ENCODE measurements at regions of chr2 and their contacts with region 1.

Region 1: DNA sequence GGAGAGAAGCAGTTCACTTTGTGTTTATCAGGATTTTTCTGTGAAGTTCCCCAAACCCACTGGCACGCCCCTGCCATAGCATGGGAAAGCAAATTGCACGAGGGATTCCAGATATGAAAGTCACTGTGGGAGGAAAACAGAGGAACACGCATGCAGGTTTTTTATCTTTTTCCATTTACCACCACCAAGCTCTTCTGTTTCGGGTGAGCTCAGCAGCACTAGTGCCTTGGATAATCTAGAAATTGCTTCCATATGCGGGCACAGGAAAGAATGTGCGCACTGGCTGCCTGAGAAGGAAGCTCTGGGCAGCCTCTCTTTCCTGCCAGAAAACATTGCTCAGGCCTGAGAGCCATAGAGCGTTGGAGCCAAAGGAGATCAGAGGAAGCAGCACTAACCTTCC is 65.9 kb upstream of the WIPF1 start:
- DNase-seq: peak in 1 of 2 donors; percentile 80
- H3K4me3 ChIP-seq: peak overlapping the region in 1 of 2 donors; percentile 6
- H3K27ac ChIP-seq: peak overlapping the region; percentile 79 to 84
- H3K4me1 ChIP-seq: peaks cover 33 to 34% of the 10 kb centered on the region in 2 donors
- H3K27me3 ChIP-seq: no peaks in the 10 kb centered on the region
- CTCF ChIP-seq: no peak

Region 2: GRCh38 chr2:174615871-174616436 is 47.6 kb before region 1 on chr2:
- intact Hi-C with region 1: loop called (anchors 2 kb)
- DNase-seq: no peak
- H3K4me3 ChIP-seq: no peak overlapping the region
- H3K27ac ChIP-seq: peak overlapping the region; percentile 70 to 81
- H3K4me1 ChIP-seq: peaks cover 7 to 47% of the 10 kb centered on the region in 2 donors
- H3K27me3 ChIP-seq: no peaks in the 10 kb centered on the region
- CTCF ChIP-seq: no peak

Region 3: DNA sequence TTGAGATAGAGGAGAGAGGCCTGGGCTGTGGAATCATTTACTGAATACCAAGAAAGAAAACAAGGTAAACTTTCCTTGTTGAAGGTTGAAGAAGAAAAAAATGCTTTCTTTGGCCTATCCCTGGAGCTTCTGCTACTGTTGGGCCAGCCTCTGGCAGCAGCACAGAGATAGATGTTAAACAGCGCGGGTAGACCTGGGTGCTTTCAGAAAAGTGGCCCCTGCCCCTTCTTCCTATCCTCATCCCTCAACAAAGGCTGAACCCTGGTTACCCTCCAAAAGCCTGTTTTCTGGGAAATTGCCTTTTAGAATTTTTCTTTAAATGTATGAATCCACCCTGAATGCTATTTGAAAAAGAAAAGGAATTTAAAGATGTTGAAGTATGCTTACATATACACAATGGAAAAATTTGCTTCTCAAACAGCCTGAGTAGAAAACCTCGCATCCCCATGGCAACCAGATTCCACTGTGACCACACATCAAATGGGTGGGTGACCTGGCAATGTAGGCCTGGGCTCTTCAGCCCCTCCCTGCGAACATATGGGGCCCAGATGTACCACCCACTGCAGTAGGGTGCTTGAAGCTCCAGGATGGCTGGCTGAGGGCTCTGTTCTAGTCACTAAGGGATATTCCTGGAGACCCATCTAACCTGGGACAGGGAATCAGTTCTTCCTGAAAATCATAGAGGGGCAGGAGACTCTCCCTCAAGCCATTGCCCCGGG is 124.1 kb after region 1 on chr2:
- intact Hi-C with region 1: no loop called
- DNase-seq: no peak
- H3K4me3 ChIP-seq: no peak overlapping the region
- H3K27ac ChIP-seq: no peak overlapping the region
- H3K4me1 ChIP-seq: no peaks in the 10 kb centered on the region
- H3K27me3 ChIP-seq: no peaks in the 10 kb centered on the region
- CTCF ChIP-seq: no peak

Measured in ascending aorta (tissue), 2 donors.